ENCODE measurements at regions of chr12 and their contacts with region 1.

Region 1: GRCh38 chr12:64273527-64274403 is 51.7 kb upstream of the KICS2 start:
- DNase-seq: peak; percentile 73
- ATAC-seq: peak; percentile 92
- H3K4me3 ChIP-seq: no peak overlapping the region
- H3K27ac ChIP-seq: no peak overlapping the region
- H3K4me1 ChIP-seq: peaks cover 3% of the 10 kb centered on the region; the same call in 1 of the 2 replicates
- H3K27me3 ChIP-seq: no peaks in the 10 kb centered on the region
- CTCF ChIP-seq: peak; percentile 84

Region 2: GRCh38 chr12:64392221-64392620 is 118.5 kb after region 1 on chr12:
- CTCF ChIA-PET with region 1: no interaction called
- POLR2A ChIA-PET with region 1: no interaction called
- intact Hi-C with region 1: loop called (anchors 1 kb)
- DNase-seq: peak; percentile 76
- ATAC-seq: peak; percentile 63
- H3K4me3 ChIP-seq: no peak overlapping the region
- H3K27ac ChIP-seq: no peak overlapping the region
- H3K4me1 ChIP-seq: peaks cover 13% of the 10 kb centered on the region
- H3K27me3 ChIP-seq: no peaks in the 10 kb centered on the region
- CTCF ChIP-seq: peak; percentile 69